A673 (cell line): ENCODE measurements at regions of chr12 and their contacts with region 1.

Region 1: DNA sequence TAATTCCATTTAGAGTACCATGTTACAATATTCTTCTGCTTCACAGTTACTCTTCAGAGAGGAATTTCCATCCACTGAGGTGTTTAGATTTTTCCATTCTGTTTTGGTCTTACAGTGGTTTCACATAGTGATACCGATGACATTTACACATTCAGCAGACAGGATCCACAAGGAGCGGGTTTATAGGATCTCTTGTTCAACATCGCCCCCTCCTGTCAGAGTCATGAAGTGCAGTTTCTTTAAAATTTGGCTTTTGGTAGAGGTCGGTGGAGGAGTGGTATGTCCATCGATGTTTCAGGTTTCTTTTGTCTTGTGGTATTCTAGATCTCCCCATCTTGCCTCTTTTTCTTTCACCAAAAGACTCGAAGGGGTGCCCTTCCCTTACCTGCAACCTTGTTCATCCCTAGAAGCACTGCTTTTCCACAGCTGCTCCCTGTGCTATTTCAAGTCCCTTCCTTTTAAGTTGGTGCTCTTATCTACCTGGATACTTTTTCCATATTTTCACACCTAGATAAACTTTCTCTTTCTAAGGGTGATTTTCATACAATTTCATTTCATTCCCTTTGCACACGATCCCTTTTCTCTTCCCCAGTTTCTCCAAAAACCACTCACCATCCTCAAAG is 181.3 kb downstream of the ITPR2 start:
- DNase-seq: peak; percentile 83
- H3K4me3 ChIP-seq: no peak overlapping the region
- H3K27ac ChIP-seq: no peak overlapping the region
- H3K4me1 ChIP-seq: peaks cover 8% of the 10 kb centered on the region
- H3K27me3 ChIP-seq: no peaks in the 10 kb centered on the region
- CTCF ChIP-seq: peak; percentile 82

Region 2: GRCh38 chr12:26097046-26097878 is 554.4 kb before region 1 on chr12:
- CTCF ChIA-PET with region 1: interaction called, 6 read pairs
- POLR2A ChIA-PET with region 1: no interaction called
- intact Hi-C with region 1: loop called (anchors 5 kb)
- DNase-seq: peak; percentile 83
- H3K4me3 ChIP-seq: no peak overlapping the region
- H3K27ac ChIP-seq: no peak overlapping the region
- H3K4me1 ChIP-seq: peaks cover 3% of the 10 kb centered on the region
- H3K27me3 ChIP-seq: no peaks in the 10 kb centered on the region
- CTCF ChIP-seq: peak; percentile 95

Region 3: GRCh38 chr12:26434299-26435068 is 217.2 kb before region 1 on chr12:
- CTCF ChIA-PET with region 1: no interaction called
- POLR2A ChIA-PET with region 1: no interaction called
- intact Hi-C with region 1: loop called (anchors 2 kb)
- DNase-seq: peak; percentile 79
- H3K4me3 ChIP-seq: no peak overlapping the region
- H3K27ac ChIP-seq: no peak overlapping the region
- H3K4me1 ChIP-seq: no peaks in the 10 kb centered on the region
- H3K27me3 ChIP-seq: no peaks in the 10 kb centered on the region
- CTCF ChIP-seq: peak; percentile 79